B cell (primary cell): ENCODE measurements at regions of chr16 and their contacts with region 1.

Region 1: GRCh38 chr16:50210266-50211038 is 55.9 kb upstream of the ADCY7 start:
- DNase-seq: peak; percentile 59
- ATAC-seq: peak; percentile 77
- H3K4me3 ChIP-seq: no peak overlapping the region
- H3K4me3 Mint-ChIP-seq: peak overlapping the region; percentile 38
- H3K27ac ChIP-seq: peak overlapping the region in 1 of 2 donors; percentile 20
- H3K27ac Mint-ChIP-seq: peak overlapping the region; percentile 67
- H3K4me1 ChIP-seq: peaks cover 17% of the 10 kb centered on the region in 2 donors
- H3K4me1 Mint-ChIP-seq: peaks cover 28% of the 10 kb centered on the region
- H3K27me3 ChIP-seq: no peaks in the 10 kb centered on the region
- H3K27me3 Mint-ChIP-seq: no peaks in the 10 kb centered on the region
- CTCF ChIP-seq: peak; percentile 56

Region 2: DNA sequence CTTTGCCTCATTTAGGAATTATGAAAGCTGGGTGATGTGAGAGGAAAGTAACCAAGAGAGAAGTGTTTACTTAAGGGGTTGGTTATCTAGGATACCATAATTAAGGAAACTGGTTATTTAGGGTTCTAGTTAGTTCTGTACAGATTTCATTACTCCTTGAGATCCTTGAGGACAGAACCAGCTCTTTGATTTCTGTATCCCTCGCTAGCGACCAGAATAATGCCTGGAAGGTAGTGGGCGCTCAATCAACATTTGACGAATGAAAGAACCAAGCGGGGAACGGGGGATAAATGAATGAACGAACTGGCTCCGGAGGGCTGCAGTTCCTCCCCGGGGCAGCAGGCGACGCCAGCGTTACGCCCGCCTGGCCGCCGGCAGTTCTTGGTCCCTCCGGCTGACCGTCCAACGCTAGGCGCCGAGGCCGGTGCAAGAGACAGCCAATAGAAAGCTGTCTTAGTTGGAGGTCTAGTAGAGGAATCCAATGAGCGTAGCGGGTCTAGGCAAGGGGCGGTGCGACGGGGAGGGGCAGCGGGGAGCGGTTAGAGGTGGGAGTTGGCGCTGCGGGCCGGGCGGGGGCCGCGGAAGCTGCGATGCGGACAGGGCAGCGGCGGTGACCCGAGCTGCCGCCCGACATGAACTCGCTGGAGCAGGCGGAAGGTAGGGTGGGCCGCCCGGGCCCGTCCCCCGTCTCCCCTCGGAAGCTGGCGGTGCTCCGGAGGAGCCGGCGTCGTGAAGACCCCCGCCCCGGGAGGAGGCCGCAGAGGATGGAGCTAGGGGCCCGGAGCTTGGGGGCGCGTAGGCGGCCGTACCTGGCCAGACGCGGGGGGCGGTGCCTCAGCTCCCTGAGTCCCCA is 185.5 kb before region 1 on chr16 and contains the start of gene CNEP1R1:
- CTCF ChIA-PET with region 1: interaction called, 89 read pairs
- POLR2A ChIA-PET with region 1: no interaction called
- intact Hi-C with region 1: loop called (anchors 1 kb)
- DNase-seq: peak; percentile 98
- ATAC-seq: peak; percentile 94
- H3K4me3 ChIP-seq: peak within 1 kb of the TSS; percentile 87 to 93 (median 92)
- H3K4me3 Mint-ChIP-seq: peak within 1 kb of the TSS; percentile 93
- H3K27ac ChIP-seq: peak within 1 kb of the TSS; percentile 31 to 78
- H3K27ac Mint-ChIP-seq: peak within 1 kb of the TSS; percentile 89
- H3K4me1 ChIP-seq: peaks cover 12 to 14% of the 10 kb centered on the region in 2 donors
- H3K4me1 Mint-ChIP-seq: peaks cover 23% of the 10 kb centered on the region
- H3K27me3 ChIP-seq: no peaks in the 10 kb centered on the region
- H3K27me3 Mint-ChIP-seq: peaks cover 7% of the 10 kb centered on the region
- CTCF ChIP-seq: peak; percentile 100
- total RNA-seq, gene CNEP1R1: 32.9 and 36.9 TPM in 2 replicates

Region 3: GRCh38 chr16:50152807-50153452 is 57.5 kb before region 1 on chr16 and contains the start of gene TENT4B:
- CTCF ChIA-PET with region 1: interaction called, 14 read pairs
- POLR2A ChIA-PET with region 1: interaction called, 3 read pairs
- intact Hi-C with region 1: loop called (anchors 1 kb)
- DNase-seq: peak; percentile 96
- ATAC-seq: peak; percentile 81
- H3K4me3 ChIP-seq: peak within 1 kb of the TSS; percentile 46 to 93 (median 82)
- H3K4me3 Mint-ChIP-seq: peak within 1 kb of the TSS; percentile 90
- H3K27ac ChIP-seq: peak within 1 kb of the TSS; percentile 85 to 86
- H3K27ac Mint-ChIP-seq: peak within 1 kb of the TSS; percentile 94
- H3K4me1 ChIP-seq: peaks cover 23 to 28% of the 10 kb centered on the region in 2 donors
- H3K4me1 Mint-ChIP-seq: peaks cover 34% of the 10 kb centered on the region
- H3K27me3 ChIP-seq: no peaks in the 10 kb centered on the region
- H3K27me3 Mint-ChIP-seq: no peaks in the 10 kb centered on the region
- CTCF ChIP-seq: no peak
- total RNA-seq, gene TENT4B: 17.1 and 18.6 TPM in 2 replicates

Region 4: GRCh38 chr16:50326949-50327402 is 116.5 kb after region 1 on chr16:
- CTCF ChIA-PET with region 1: interaction called, 17 read pairs
- POLR2A ChIA-PET with region 1: no interaction called
- intact Hi-C with region 1: no loop called
- DNase-seq: peak; percentile 50
- ATAC-seq: peak; percentile 85
- H3K4me3 ChIP-seq: no peak overlapping the region
- H3K4me3 Mint-ChIP-seq: peak overlapping the region; percentile 24
- H3K27ac ChIP-seq: peak overlapping the region; percentile 38 to 63
- H3K27ac Mint-ChIP-seq: peak overlapping the region; percentile 74
- H3K4me1 ChIP-seq: peaks cover 0 to 31% of the 10 kb centered on the region in 2 donors
- H3K4me1 Mint-ChIP-seq: peaks cover 51% of the 10 kb centered on the region
- H3K27me3 ChIP-seq: no peaks in the 10 kb centered on the region
- H3K27me3 Mint-ChIP-seq: no peaks in the 10 kb centered on the region
- CTCF ChIP-seq: peak; percentile 76

Region 5: GRCh38 chr16:50360033-50360778 is 149.8 kb after region 1 on chr16:
- CTCF ChIA-PET with region 1: interaction called, 142 read pairs
- POLR2A ChIA-PET with region 1: no interaction called
- intact Hi-C with region 1: loop called (anchors 1 kb)
- DNase-seq: no peak
- ATAC-seq: no peak
- H3K4me3 ChIP-seq: no peak overlapping the region
- H3K4me3 Mint-ChIP-seq: no peak overlapping the region
- H3K27ac ChIP-seq: peak overlapping the region in 1 of 2 donors; percentile 35
- H3K27ac Mint-ChIP-seq: peak overlapping the region; percentile 46
- H3K4me1 ChIP-seq: peaks cover 2 to 4% of the 10 kb centered on the region in 2 donors
- H3K4me1 Mint-ChIP-seq: peaks cover 31% of the 10 kb centered on the region
- H3K27me3 ChIP-seq: no peaks in the 10 kb centered on the region
- H3K27me3 Mint-ChIP-seq: no peaks in the 10 kb centered on the region
- CTCF ChIP-seq: no peak

Region 6: DNA sequence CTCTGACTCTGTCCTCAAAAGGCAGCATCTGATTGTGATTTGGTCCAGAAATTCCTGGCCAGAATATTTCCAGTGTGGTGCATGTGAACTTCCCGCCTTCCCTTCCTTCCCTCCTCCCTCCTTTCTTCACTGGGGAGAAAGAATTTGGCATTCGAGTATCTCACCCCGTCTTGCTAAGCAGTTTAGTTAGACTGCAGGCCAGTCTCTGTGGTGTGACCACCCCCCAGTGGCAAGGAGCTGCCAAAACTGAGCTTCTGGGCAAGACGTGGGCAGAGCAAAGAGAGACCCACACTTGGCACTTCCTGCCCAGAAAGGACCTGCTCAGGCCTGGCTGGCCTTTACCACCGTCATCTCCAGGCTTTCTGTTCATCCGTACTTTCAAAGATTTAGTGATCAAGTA is 434.3 kb after region 1 on chr16:
- CTCF ChIA-PET with region 1: interaction called, 3 read pairs
- POLR2A ChIA-PET with region 1: no interaction called
- intact Hi-C with region 1: loop called (anchors 1 kb)
- DNase-seq: peak; percentile 47
- ATAC-seq: peak; percentile 68
- H3K4me3 ChIP-seq: no peak overlapping the region
- H3K4me3 Mint-ChIP-seq: no peak overlapping the region
- H3K27ac ChIP-seq: no peak overlapping the region
- H3K27ac Mint-ChIP-seq: no peak overlapping the region
- H3K4me1 ChIP-seq: no peaks in the 10 kb centered on the region
- H3K4me1 Mint-ChIP-seq: no peaks in the 10 kb centered on the region
- H3K27me3 ChIP-seq: peaks cover 0 to 6% (median 0%) of the 10 kb centered on the region in 4 experiments
- H3K27me3 Mint-ChIP-seq: peaks cover 16% of the 10 kb centered on the region
- CTCF ChIP-seq: peak; percentile 59

Region 7: DNA sequence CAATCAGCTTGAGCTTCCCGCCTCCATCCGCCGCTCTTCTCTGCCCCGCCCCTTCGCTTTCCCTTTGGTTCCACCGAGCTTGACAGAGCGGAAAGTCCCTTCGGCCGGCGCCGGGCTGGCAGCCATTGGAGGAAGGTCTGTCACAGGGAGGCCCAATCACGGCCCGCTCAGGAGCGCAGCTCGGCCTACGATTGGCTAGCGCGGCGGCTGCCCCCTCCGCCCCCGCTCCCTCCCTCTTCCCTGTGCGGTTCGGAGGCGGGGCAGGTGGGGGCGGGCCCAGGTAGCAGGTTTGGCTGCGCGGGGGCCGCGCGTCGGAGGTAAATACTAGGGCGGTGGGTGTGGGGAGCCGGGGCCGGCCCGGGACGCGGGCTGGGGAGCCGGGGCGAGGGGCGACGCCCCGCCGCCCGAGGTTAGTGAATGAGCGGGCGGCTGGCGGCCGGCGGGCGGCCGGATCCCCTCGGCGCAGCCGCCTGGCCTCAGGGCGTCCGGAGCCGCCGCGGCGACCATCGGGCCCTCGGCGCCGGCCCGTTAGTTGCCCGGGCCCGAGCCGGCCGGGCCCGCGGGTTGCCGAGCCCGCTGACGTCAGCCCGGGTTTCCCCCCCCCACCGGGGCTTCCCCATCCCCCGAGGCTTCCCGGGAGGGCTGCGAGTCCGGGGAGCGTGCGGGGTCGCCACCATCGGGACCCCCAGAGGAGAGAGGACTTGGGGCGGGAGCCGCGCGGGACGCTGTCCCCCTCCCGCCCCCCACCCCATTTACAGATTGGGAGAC is 531.5 kb after region 1 on chr16 and contains the start of gene CYLD:
- CTCF ChIA-PET with region 1: interaction called, 3 read pairs
- POLR2A ChIA-PET with region 1: no interaction called
- intact Hi-C with region 1: loop called (anchors 5 kb)
- DNase-seq: peak; percentile 100
- ATAC-seq: peak; percentile 86
- H3K4me3 ChIP-seq: peak within 1 kb of the TSS; percentile 75 to 96 (median 85)
- H3K4me3 Mint-ChIP-seq: peak within 1 kb of the TSS; percentile 91
- H3K27ac ChIP-seq: peak within 1 kb of the TSS; percentile 100
- H3K27ac Mint-ChIP-seq: peak within 1 kb of the TSS; percentile 97
- H3K4me1 ChIP-seq: peaks cover 34% of the 10 kb centered on the region in 2 donors
- H3K4me1 Mint-ChIP-seq: peaks cover 49% of the 10 kb centered on the region
- H3K27me3 ChIP-seq: no peaks in the 10 kb centered on the region
- H3K27me3 Mint-ChIP-seq: no peaks in the 10 kb centered on the region
- CTCF ChIP-seq: no peak
- total RNA-seq, gene CYLD: 160 and 166 TPM in 2 replicates